ENCODE measurements at regions of chr19 and their contacts with region 1.

Region 1: GRCh38 chr19:45558399-45558878 is 26.2 kb downstream of the OPA3 start:
- DNase-seq: peak; percentile 76 to 86 (median 83)
- ATAC-seq: peak; percentile 100
- H3K4me3 ChIP-seq: no peak overlapping the region
- H3K27ac ChIP-seq: no peak overlapping the region; the same call in 2 of the 3 replicates
- H3K4me1 ChIP-seq: peaks cover 0 to 19% of the 10 kb centered on the region in 2 experiments; a peak in 3 of 5 replicates
- H3K27me3 ChIP-seq: no peaks in the 10 kb centered on the region
- CTCF ChIP-seq: peak; percentile 93 to 95 (median 95)
- EP300 ChIP-seq: no peak
- POLR2A ChIP-seq: no peak
- RAD21 ChIP-seq: peak; percentile 65 to 84

Region 2: DNA sequence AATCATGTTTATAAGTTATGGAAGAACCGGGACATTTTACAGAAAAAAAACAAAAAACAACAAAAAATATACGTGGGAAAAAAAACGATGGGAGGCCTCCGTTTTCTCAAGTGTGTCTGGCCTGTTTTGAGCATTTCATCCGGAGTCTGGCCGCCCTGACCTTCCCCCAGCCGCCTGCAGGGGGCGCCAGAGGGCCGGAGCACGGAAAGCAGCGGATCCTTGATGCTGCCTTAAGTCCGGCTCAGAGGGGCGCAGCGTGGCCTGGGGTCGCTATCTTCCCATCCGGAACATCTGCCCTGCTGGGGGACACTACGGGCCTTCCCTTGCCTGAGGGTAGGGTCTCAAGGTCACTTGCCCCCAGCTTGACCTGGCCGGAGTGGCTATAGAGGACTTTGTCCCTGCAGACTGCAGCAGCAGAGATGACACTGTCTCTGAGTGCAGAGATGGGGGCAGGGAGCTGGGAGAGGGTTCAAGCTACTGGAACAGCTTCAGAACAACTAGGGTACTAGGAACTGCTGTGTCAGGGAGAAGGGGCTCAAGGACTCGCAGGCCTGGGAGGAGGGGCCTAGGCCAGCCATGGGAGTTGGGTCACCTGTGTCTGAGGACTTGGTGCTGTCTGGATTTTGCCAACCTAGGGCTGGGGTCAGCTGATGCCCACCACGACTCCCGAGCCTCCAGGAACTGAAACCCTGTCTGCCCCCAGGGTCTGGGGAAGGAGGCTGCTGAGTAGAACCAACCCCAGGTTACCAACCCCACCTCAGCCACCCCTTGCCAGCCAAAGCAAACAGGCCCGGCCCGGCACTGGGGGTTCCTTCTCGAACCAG is 654.6 kb before region 1 on chr19:
- CTCF ChIA-PET with region 1: no interaction called
- POLR2A ChIA-PET with region 1: no interaction called
- in situ Hi-C with region 1: no loop called
- intact Hi-C with region 1: no loop called
- DNase-seq: peak; percentile 70 to 86 (median 74)
- ATAC-seq: peak; percentile 81
- H3K4me3 ChIP-seq: no peak overlapping the region
- H3K27ac ChIP-seq: peak overlapping the region; percentile 40
- H3K4me1 ChIP-seq: peaks cover 20 to 67% of the 10 kb centered on the region in 2 experiments; a peak in 4 of 5 replicates
- H3K27me3 ChIP-seq: no peaks in the 10 kb centered on the region
- CTCF ChIP-seq: peak; percentile 93 to 98 (median 94)
- EP300 ChIP-seq: no peak
- POLR2A ChIP-seq: peak; percentile 83
- RAD21 ChIP-seq: peak; percentile 92

Region 3: GRCh38 chr19:45423589-45424190 is 134.7 kb before region 1 on chr19 and contains the start of gene ERCC1:
- CTCF ChIA-PET with region 1: interaction called, 4 read pairs
- POLR2A ChIA-PET with region 1: no interaction called
- in situ Hi-C with region 1: no loop called
- intact Hi-C with region 1: loop called (anchors 5 kb)
- DNase-seq: peak; percentile 98 to 99 (median 98)
- ATAC-seq: peak; percentile 88
- H3K4me3 ChIP-seq: peak within 1 kb of the TSS; percentile 54
- H3K27ac ChIP-seq: peak within 1 kb of the TSS; percentile 99
- H3K4me1 ChIP-seq: peaks cover 22 to 61% of the 10 kb centered on the region in 2 experiments; a peak in 4 of 5 replicates
- H3K27me3 ChIP-seq: no peaks in the 10 kb centered on the region
- CTCF ChIP-seq: no peak
- EP300 ChIP-seq: peak; percentile 47
- POLR2A ChIP-seq: peak; percentile 96
- RAD21 ChIP-seq: no peak
- polyA plus RNA-seq, gene ERCC1: 9.3 to 17.0 TPM

Region 4: GRCh38 chr19:45506246-45506990 is 52.0 kb before region 1 on chr19:
- CTCF ChIA-PET with region 1: no interaction called
- POLR2A ChIA-PET with region 1: interaction called, 3 read pairs
- in situ Hi-C with region 1: no loop called
- intact Hi-C with region 1: loop called (anchors 1 kb)
- DNase-seq: peak; percentile 89 to 98 (median 91)
- ATAC-seq: peak; percentile 81
- H3K4me3 ChIP-seq: peak overlapping the region; percentile 99
- H3K27ac ChIP-seq: peak overlapping the region; percentile 98
- H3K4me1 ChIP-seq: peaks cover 34 to 51% of the 10 kb centered on the region in 2 experiments
- H3K27me3 ChIP-seq: no peaks in the 10 kb centered on the region
- CTCF ChIP-seq: peak; percentile 70 to 79 (median 74)
- EP300 ChIP-seq: no peak; the same call in 1 of the 2 replicates
- POLR2A ChIP-seq: peak; percentile 85
- RAD21 ChIP-seq: peak in 1 of 2 experiments; percentile 49; a peak in 2 of 4 replicates

Region 5: DNA sequence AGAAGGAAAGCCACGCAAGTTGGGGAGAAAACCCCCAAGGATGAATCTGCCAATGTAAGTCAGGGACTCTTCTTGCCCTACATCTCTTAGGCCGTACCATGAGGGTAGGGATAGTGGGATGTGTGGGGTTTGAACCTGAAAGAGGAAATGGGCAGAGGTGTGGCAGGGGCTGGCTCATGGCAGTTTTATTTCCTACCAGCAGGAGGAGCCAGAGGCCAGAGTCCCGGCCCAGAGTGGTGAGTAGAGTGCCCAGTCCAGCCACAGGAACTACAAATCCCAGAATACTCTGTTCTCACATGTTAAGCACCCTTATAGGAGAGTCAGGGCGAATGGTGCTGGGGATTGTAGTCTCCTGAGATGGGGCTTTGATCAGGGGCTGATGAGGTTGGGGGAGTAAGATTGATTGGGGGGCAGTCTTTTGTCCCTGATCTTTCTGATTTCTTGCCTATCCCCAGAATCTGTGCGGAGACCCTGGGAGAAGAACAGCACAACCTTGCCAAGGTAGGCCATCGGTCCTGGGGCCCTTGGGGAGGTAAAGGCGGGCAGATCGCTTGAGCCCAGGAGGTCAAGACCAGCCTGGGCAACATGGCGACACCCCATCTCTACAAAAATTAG is 34.7 kb before region 1 on chr19:
- CTCF ChIA-PET with region 1: interaction called, 16 read pairs
- POLR2A ChIA-PET with region 1: no interaction called
- in situ Hi-C with region 1: loop called (anchors 5 kb)
- intact Hi-C with region 1: loop called (anchors 1 kb)
- DNase-seq: peak; percentile 77 to 83 (median 82)
- ATAC-seq: peak; percentile 86
- H3K4me3 ChIP-seq: no peak overlapping the region
- H3K27ac ChIP-seq: no peak overlapping the region
- H3K4me1 ChIP-seq: peaks cover 3 to 32% of the 10 kb centered on the region in 2 experiments; a peak in 3 of 5 replicates
- H3K27me3 ChIP-seq: no peaks in the 10 kb centered on the region
- CTCF ChIP-seq: peak; percentile 86 to 96 (median 95)
- EP300 ChIP-seq: no peak
- POLR2A ChIP-seq: no peak; the same call in 1 of the 2 replicates
- RAD21 ChIP-seq: peak; percentile 69 to 77

Region 6: DNA sequence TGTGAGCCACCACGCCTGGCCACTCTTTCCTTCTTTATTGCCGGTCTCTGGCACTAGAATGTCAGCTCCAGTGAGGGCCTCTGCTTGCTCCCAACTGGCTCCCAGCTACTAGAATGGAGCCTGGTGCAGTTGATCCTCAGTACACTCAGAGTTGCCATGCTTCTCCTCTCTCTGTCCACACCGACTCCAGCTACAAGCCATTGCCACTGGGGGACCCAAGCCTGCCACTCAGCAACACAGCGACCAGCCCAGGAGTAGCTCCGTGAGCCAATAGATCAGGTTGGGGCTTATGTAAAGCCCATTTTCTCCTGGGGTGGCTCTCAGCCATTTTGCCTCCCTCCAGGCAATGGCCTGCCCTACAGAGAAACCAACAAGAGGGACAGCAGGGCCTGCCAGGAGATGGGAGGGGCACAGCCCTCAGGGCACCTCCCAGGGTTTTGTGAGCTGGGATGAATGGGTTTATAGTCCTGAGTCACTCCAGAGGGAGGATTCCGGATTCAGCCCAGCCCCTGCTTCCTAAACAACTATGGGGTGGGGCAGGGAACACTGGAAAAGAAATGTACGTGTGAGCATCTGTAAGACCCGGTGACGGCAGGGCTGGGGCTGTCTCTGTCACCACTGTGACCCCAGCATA is 10.3 kb before region 1 on chr19:
- CTCF ChIA-PET with region 1: interaction called, 4 read pairs
- POLR2A ChIA-PET with region 1: interaction called, 10 read pairs
- in situ Hi-C with region 1: no loop called
- intact Hi-C with region 1: no loop called
- DNase-seq: peak in 2 of 4 experiments; percentile 5 to 7
- ATAC-seq: no peak
- H3K4me3 ChIP-seq: no peak overlapping the region
- H3K27ac ChIP-seq: no peak overlapping the region
- H3K4me1 ChIP-seq: no peaks in the 10 kb centered on the region; a peak in 2 of 5 replicates
- H3K27me3 ChIP-seq: no peaks in the 10 kb centered on the region
- CTCF ChIP-seq: no peak
- EP300 ChIP-seq: no peak
- POLR2A ChIP-seq: no peak
- RAD21 ChIP-seq: no peak

Region 7: GRCh38 chr19:45615795-45616708 is 57.6 kb after region 1 on chr19:
- CTCF ChIA-PET with region 1: no interaction called
- POLR2A ChIA-PET with region 1: no interaction called
- in situ Hi-C with region 1: no loop called
- intact Hi-C with region 1: no loop called
- DNase-seq: peak; percentile 97 to 98 (median 98)
- ATAC-seq: peak; percentile 99
- H3K4me3 ChIP-seq: peak overlapping the region; percentile 33
- H3K27ac ChIP-seq: peak overlapping the region; percentile 81
- H3K4me1 ChIP-seq: peaks cover 11 to 19% of the 10 kb centered on the region in 2 experiments
- H3K27me3 ChIP-seq: no peaks in the 10 kb centered on the region
- CTCF ChIP-seq: no peak
- EP300 ChIP-seq: no peak
- POLR2A ChIP-seq: peak; percentile 78
- RAD21 ChIP-seq: no peak

Region 8: DNA sequence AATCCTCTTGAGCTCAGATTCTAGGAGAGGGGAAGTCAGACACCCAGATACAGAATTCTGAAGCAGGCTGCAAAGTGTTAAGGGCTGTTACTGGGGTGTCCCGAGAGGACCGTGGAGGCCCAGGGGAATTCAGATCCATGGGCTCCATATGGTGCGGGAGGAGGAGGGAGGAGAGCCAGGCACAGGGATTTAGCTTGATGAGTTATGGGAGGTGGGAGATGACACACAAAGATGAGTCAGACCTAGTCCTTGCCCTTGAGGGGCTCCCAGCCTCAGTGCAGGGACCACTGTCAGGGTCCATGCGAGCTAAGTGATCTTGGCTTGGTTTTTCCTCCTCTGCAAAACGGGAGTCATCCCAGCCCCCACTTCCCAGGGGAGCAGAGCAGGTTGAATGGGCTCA is 95.2 kb after region 1 on chr19:
- CTCF ChIA-PET with region 1: no interaction called
- POLR2A ChIA-PET with region 1: no interaction called
- in situ Hi-C with region 1: no loop called
- intact Hi-C with region 1: no loop called
- DNase-seq: no peak
- ATAC-seq: peak; percentile 22; the same call in 2 of the 3 replicates
- H3K4me3 ChIP-seq: no peak overlapping the region
- H3K27ac ChIP-seq: no peak overlapping the region
- H3K4me1 ChIP-seq: peaks cover 4 to 7% of the 10 kb centered on the region in 2 experiments; a peak in 2 of 5 replicates
- H3K27me3 ChIP-seq: no peaks in the 10 kb centered on the region
- CTCF ChIP-seq: no peak
- EP300 ChIP-seq: no peak
- POLR2A ChIP-seq: no peak
- RAD21 ChIP-seq: no peak